ENCODE measurements at regions of chr9 and their contacts with region 1.

Region 1: DNA sequence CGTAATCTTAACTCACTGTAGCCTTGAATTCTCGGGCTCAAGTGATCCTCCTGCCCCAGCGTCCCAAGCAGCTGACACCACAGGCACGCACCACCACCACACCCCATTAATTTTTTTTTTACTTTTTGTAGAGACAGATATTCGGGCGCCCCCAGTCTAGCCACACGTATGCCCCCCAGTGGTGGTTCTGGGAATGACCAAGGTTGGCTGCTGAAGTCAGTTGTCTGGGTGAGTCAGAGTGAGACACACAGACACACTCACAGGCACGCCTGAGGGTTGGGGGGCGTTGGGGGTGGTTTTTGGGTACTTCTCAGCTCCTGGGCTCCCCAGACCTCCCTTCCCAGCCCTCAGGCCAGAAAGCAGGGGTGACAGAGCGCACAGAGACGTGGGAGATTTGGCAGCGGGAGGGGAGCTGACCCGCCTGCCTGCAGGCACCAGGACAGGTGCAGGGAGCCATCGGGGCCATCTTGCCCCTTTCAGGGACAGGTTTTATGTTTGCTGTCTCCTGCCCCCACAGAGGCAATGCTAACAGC is 4.2 kb upstream of the ENTPD8 start:
- DNase-seq: peak; percentile 75 to 77
- ATAC-seq: peak; percentile 63 to 73
- H3K4me3 ChIP-seq: no peak overlapping the region
- H3K27ac ChIP-seq: peak overlapping the region in 1 of 2 experiments; percentile 48; a peak in 1 of 6 replicates
- H3K4me1 ChIP-seq: peaks cover 10% of the 10 kb centered on the region
- CTCF ChIP-seq: peak; percentile 79
- EP300 ChIP-seq: no peak
- POLR2A ChIP-seq: no peak
- RAD21 ChIP-seq: peak; percentile 62 to 66

Region 2: DNA sequence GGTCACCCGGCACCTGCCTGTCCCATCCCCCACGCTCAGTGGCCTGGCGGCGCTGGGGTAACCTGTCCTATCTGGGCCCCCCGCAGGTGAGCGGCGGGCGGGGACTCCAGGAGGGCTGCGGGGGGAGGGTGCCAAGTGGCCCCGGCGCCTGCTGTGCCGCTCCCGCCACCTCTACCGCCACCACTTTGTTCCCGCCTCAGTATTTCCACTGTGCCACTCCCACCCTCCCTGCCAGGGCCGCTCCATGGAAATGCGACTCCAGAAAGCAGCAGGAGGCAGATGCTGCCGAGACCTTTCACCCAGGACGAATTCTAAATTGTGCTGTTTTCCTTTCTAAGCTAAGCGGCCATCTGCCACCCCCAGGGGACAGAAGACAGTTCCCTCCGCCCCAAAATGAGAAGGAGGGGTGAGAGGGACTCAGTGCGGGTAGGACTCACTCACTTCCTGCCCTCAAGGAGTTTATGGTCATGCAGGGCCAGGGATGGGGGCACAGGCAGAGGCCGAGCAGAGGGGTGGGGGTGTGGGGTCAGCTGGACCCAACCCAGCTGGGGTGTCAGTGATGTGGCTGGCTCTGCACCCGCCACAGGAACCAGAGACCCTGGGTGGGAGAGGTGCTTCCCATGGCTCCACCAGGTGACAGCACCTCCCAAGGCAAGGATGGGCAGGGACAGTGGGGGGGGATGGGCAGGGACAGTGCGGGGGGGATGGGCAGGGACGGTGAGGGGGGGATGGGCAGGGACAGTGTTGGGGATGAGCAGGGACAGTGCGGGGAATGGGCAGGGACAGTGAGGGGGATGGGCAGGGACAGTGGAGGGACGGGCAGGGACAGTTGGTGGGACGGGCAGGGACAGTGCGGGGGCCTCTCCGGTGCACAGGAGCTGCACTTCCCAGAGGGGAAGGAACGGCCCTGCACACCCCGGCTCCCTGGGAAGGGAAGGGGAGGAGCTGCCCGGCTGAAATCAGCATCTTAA is 917.3 kb before region 1 on chr9:
- CTCF ChIA-PET with region 1: no interaction called
- POLR2A ChIA-PET with region 1: no interaction called
- DNase-seq: peak; percentile 45 to 48
- ATAC-seq: peak; percentile 32 to 66; a peak in 5 of 6 replicates
- H3K4me3 ChIP-seq: no peak overlapping the region
- H3K27ac ChIP-seq: peak overlapping the region; percentile 62 to 83
- H3K4me1 ChIP-seq: peaks cover 42% of the 10 kb centered on the region
- CTCF ChIP-seq: no peak
- EP300 ChIP-seq: no peak
- POLR2A ChIP-seq: no peak
- RAD21 ChIP-seq: 0 out of 5 replicates have a peak, but pooled peaks of 1 of the 2 experiments have one; percentile 12

Region 3: DNA sequence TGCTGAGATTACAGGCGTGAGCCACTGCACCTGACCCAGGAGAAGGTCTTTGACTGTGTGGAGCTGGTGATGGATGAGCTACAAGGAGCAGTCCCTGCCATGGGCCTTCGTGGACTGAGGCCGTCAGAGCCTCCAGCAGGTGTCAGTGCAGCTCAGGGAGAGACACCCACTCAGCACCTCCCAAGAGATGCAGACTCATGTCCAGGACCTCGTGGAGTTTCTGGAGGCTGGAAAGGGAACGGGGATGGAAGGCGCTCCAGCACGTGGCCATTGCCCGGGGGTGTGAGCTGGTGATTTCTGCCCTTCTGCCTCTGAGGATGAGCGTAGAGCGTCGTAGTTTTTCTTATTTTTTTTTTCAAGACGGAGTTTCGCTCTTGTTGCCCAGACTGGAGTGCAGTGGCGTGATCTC is 158.4 kb before region 1 on chr9:
- CTCF ChIA-PET with region 1: interaction called, 18 read pairs
- POLR2A ChIA-PET with region 1: no interaction called
- DNase-seq: peak; percentile 88 to 94
- ATAC-seq: peak; percentile 99 to 100
- H3K4me3 ChIP-seq: no peak overlapping the region
- H3K27ac ChIP-seq: no peak overlapping the region
- H3K4me1 ChIP-seq: peaks cover 7% of the 10 kb centered on the region; the same call in 1 of the 3 replicates
- CTCF ChIP-seq: peak; percentile 54
- EP300 ChIP-seq: no peak
- POLR2A ChIP-seq: no peak
- RAD21 ChIP-seq: peak; percentile 59 to 86

Region 4: GRCh38 chr9:137429974-137430722 is 15.2 kb before region 1 on chr9:
- CTCF ChIA-PET with region 1: interaction called, 98 read pairs
- POLR2A ChIA-PET with region 1: no interaction called
- DNase-seq: no peak
- ATAC-seq: peak; percentile 45 to 77; a peak in 4 of 6 replicates
- H3K4me3 ChIP-seq: peak overlapping the region; percentile 30
- H3K27ac ChIP-seq: peak overlapping the region in 1 of 2 experiments; percentile 66; a peak in 3 of 6 replicates
- H3K4me1 ChIP-seq: peaks cover 10% of the 10 kb centered on the region; the same call in 1 of the 3 replicates
- CTCF ChIP-seq: no peak
- EP300 ChIP-seq: no peak
- POLR2A ChIP-seq: no peak
- RAD21 ChIP-seq: no peak

Region 5: DNA sequence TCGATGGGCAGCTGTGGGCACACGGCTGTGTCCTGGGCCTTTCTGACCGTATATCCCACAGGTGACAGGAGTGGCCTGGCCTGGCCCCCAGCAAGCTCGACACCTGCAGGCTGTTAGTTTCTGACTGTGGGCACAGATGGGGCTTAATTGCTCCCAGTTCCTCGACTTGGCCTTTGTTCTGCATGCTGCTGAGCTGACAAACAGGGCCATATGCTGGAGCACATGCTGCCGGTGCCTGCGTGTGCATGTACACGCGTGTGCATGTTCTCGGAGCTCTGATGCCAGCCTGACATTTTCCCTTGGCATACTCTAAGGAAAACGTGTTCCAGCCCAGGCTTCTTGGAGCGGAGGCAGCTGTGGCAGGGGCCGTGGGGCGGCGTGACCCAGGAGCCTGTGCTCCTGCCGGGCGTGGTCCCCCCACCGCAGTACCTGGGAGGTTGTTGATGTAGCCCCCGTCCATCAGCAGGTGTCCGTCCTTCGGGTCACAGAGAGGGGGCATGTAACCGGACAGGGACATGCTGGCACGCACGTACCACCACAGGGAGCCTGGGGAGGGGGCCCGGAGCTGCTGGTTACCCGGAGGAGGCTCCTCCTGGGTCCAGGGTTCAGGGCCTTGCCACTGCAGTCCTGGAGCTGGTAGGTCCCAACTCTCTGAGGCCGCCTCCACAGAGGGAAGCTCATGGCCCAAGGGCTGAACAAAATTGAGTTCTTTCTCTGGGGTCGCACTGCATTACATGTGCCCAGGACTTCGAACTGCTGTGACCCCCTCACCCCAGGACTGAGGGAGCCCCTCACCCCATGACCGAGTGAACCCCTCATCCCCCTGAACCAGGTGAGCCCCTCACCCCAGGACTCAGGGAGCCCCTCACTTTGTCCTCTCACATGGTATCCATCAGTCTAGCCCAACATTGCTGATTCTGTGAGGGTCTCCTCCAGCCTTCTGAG is 17.9 kb after region 1 on chr9:
- CTCF ChIA-PET with region 1: interaction called, 16 read pairs
- POLR2A ChIA-PET with region 1: interaction called, 4 read pairs
- DNase-seq: no peak
- ATAC-seq: no peak
- H3K4me3 ChIP-seq: no peak overlapping the region
- H3K27ac ChIP-seq: no peak overlapping the region
- H3K4me1 ChIP-seq: peaks cover 7% of the 10 kb centered on the region
- CTCF ChIP-seq: no peak
- EP300 ChIP-seq: no peak
- POLR2A ChIP-seq: no peak
- RAD21 ChIP-seq: no peak

Measured in A549 (cell line).